WTC11 (cell line): ENCODE measurements at regions of chr19 and their contacts with region 1.

Region 1: DNA sequence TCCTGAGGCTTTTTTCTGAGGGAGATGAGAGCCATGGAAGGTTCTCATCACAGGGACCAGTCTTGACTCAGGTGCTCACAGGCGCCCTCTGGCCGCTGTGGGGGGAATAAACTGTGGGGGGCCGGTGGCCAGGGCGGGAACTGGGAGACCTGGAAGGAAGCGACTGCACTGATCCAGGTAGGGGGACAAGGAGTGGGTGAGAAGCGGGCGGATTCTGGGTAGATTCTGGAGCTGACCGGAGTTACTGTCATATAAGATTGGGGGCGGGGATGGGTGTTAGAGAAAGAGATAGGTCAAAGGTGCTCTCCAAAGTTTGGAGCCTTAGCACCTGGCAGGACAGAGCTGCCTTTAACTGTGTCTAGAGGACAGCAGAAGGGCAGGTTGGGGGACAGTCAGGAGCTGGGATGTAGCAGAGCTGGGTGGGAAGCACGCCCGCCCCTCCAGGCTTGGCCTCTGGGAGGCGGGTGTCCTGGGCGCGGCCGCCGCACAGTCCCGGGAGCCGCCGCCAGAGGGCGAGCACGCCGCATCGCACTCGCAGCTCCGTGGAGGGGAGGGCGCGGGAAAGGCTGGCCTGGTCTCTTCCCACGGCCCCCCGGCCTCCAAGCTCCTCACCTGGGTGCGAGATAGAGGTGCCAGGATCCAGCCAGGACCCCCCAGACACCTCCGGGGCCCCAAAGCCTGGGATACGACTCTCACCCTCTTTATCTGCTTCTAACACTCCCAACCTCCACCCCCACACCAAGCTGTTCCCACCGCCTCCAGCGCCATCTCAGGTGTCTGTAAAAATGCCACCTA is 4.2 kb upstream of the DAND5 start:
- DNase-seq: peak; percentile 91
- ATAC-seq: peak; percentile 95
- H3K4me3 Mint-ChIP-seq: peak overlapping the region; percentile 71
- H3K27ac Mint-ChIP-seq: peak overlapping the region; percentile 65
- H3K4me1 Mint-ChIP-seq: 0 out of 2 replicates have a peak, but pooled peaks cover 5% of the 10 kb centered on the region
- H3K27me3 Mint-ChIP-seq: peaks cover 14% of the 10 kb centered on the region
- CTCF ChIP-seq: peak; percentile 85

Region 2: DNA sequence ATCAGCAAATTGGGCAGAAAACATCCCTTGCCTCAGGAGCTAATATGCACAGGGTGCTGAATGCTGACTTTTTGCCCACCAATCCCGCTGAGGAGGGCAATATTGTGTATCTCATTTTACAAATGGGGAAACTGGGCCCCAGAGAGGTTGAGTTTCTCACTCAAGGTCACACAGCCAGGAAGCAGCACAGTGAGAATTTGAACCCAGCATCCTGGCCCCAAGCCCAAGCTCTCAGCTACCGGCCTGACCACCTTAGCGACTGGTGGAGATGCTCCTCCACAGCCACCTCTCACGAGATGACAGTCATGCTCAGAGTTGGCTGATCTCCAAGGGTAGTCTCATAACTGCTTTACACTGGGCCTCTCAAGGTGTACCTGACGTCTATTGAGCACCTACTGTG is 272.3 kb before region 1 on chr19:
- CTCF ChIA-PET with region 1: no interaction called
- POLR2A ChIA-PET with region 1: no interaction called
- DNase-seq: no peak
- ATAC-seq: no peak
- H3K4me3 Mint-ChIP-seq: no peak overlapping the region
- H3K27ac Mint-ChIP-seq: no peak overlapping the region
- H3K4me1 Mint-ChIP-seq: peaks cover 3% of the 10 kb centered on the region
- H3K27me3 Mint-ChIP-seq: no peaks in the 10 kb centered on the region
- CTCF ChIP-seq: no peak

Region 3: DNA sequence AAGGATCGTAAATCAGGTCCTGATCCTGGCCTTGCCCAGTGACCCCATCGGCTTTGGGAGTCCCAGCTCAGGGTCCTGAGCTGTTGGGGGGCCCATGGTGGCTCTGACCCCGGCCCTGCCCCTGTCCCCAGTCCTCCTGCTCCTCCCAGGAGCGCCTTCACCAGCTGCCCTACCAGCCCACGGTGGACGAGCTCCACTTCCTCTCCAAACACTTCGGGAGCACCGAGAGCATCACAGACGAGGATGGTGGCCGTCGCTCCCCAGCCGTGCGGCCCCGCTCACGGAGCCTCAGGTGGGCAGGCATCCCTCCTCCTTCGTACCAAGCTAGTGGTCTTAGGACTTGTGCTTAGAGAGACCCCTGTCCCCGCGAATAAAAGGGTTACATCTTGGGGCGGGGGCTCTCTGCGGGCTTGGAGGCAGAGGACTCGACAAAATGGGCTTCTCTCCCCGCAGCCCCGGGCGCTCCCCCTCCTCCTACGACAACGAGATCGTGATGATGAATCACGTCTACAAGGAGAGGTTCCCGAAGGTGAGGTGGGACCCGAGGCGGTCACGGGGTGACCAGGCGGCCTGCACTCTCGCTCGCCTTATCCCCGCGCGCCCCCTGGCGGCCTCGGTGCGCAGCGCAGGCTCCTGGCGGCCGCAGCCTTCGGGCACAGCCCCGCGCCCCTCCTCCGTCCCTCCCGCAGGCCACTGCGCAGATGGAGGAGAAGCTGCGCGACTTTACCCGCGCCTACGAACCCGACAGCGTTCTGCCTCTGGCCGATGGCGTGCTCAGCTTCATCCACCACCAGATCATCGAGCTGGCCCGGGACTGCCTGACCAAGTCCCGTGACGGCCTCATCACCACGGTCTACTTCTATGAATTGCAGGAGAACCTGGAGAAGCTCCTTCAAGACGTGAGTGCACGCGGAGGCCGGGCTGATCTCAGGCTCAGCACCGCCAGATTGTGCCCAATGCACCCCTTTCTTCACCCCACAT is 117.8 kb before region 1 on chr19:
- CTCF ChIA-PET with region 1: interaction called, 14 read pairs
- POLR2A ChIA-PET with region 1: no interaction called
- DNase-seq: peak; percentile 98
- ATAC-seq: peak; percentile 98
- H3K4me3 Mint-ChIP-seq: peak overlapping the region; percentile 58
- H3K27ac Mint-ChIP-seq: 0 out of 2 replicates have a peak overlapping the region, but pooled peaks have one; percentile 45
- H3K4me1 Mint-ChIP-seq: peaks cover 7% of the 10 kb centered on the region
- H3K27me3 Mint-ChIP-seq: peaks cover 21% of the 10 kb centered on the region
- CTCF ChIP-seq: peak; percentile 99

Region 4: DNA sequence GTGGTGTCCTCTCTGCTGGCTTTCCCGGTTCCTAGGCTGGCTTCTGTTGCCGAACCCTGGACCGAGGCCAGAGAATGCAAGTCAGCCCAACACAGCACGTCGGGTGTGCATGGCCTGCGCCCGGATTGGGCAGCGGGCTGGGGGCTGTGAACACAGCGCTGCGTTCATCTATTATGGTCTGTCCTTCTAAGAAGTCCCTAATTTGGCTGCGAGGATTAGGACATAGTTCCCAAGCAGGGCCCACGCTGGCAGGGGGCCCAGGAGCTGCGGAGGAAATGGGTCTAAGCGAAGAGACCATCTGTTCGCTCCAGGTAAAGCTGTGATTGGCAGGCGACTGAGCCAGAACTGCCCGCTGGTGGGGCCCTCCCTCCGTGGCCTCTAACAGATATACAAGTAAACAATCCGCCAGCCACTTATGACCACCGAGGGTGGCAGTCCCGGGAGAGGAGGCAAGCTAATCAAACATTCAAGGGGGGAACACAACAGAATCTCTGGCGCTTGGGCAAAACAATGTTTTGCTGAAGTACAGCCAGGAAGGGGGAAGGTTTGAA is 52.1 kb before region 1 on chr19:
- CTCF ChIA-PET with region 1: interaction called, 31 read pairs
- POLR2A ChIA-PET with region 1: interaction called, 3 read pairs
- DNase-seq: peak; percentile 67
- ATAC-seq: peak; percentile 80
- H3K4me3 Mint-ChIP-seq: peak overlapping the region; percentile 53
- H3K27ac Mint-ChIP-seq: peak overlapping the region; percentile 94
- H3K4me1 Mint-ChIP-seq: peaks cover 27% of the 10 kb centered on the region
- H3K27me3 Mint-ChIP-seq: peaks cover 10% of the 10 kb centered on the region
- CTCF ChIP-seq: no peak

Region 5: DNA sequence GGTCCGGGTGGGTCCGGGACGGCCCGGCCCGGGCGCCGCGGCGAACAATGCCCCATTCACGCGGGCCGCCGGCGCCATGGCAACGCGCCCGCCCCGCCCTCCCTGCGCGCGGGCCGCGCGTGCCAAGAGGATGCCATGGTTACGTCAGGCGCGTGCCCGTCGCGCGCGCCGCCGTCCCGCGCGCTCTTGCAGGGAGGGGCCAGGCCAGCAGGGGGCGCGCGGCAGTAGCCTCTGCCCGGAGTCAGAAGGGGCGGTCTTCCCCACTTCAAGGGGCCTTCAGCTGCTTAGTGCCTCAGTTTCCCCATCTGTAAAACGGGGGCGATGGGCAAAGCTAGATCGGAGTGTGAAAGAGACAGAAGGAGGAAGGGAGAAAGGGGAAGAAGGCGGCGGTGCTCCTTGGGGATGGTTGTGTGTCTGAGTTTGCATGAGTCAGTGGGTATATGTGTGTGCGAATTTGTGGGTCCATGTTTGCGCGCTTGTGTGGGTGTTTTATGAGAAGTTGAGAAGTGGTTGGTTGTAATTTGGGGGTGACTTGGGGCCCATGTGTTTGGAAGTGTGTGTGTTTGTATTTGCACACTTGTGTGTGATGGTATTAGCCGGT is 18.4 kb after region 1 on chr19:
- CTCF ChIA-PET with region 1: interaction called, 197 read pairs
- POLR2A ChIA-PET with region 1: interaction called, 5 read pairs
- DNase-seq: peak; percentile 81
- ATAC-seq: peak; percentile 76
- H3K4me3 Mint-ChIP-seq: no peak overlapping the region
- H3K27ac Mint-ChIP-seq: no peak overlapping the region
- H3K4me1 Mint-ChIP-seq: peaks cover 6% of the 10 kb centered on the region; the same call in 1 of the 2 replicates
- H3K27me3 Mint-ChIP-seq: peaks cover 39% of the 10 kb centered on the region
- CTCF ChIP-seq: peak; percentile 94

Region 6: DNA sequence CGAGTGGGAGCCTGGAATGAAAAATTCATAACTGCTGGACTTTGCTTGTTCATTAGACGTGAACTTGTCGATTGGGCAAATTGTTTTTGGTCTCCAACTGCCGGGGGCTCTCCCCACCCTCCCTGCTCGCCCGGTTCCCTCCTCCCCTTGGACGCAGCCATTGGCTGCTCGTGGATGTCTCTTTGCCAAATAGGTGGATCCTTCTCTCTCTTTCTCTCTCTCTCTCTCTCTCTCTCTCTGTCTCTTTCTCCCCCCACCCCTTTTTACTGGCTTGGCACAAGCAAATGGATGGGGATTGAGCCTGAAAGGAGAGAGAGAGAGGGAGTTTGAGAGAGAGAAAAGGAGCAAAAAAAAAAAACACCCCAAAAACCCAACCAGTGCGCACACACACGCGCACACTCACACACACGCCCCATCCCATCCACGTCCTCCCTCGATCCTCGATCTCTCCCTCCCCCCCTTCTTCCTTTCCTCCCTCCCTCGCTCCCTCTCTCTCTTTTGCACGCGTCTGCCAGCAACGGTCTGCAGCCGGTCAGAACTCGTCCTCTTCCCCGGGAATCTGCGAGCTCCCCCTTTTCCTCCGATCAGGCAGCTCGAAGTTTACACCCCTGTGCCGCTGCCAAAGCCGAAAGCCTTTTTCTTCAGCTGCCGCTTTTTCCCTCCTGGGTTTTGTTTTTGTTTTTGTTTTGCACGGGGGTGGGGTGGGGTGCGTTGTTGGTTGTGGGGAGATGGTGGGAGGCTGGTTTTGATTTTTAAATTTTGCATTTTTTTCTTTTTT is 57.8 kb after region 1 on chr19:
- CTCF ChIA-PET with region 1: interaction called, 14 read pairs
- POLR2A ChIA-PET with region 1: no interaction called
- DNase-seq: peak; percentile 61
- ATAC-seq: 0 out of 2 replicates have a peak, but pooled peaks have one; percentile 6
- H3K4me3 Mint-ChIP-seq: peak overlapping the region; percentile 57
- H3K27ac Mint-ChIP-seq: no peak overlapping the region
- H3K4me1 Mint-ChIP-seq: peaks cover 71% of the 10 kb centered on the region
- H3K27me3 Mint-ChIP-seq: peaks cover 100% of the 10 kb centered on the region
- CTCF ChIP-seq: no peak

Region 7: DNA sequence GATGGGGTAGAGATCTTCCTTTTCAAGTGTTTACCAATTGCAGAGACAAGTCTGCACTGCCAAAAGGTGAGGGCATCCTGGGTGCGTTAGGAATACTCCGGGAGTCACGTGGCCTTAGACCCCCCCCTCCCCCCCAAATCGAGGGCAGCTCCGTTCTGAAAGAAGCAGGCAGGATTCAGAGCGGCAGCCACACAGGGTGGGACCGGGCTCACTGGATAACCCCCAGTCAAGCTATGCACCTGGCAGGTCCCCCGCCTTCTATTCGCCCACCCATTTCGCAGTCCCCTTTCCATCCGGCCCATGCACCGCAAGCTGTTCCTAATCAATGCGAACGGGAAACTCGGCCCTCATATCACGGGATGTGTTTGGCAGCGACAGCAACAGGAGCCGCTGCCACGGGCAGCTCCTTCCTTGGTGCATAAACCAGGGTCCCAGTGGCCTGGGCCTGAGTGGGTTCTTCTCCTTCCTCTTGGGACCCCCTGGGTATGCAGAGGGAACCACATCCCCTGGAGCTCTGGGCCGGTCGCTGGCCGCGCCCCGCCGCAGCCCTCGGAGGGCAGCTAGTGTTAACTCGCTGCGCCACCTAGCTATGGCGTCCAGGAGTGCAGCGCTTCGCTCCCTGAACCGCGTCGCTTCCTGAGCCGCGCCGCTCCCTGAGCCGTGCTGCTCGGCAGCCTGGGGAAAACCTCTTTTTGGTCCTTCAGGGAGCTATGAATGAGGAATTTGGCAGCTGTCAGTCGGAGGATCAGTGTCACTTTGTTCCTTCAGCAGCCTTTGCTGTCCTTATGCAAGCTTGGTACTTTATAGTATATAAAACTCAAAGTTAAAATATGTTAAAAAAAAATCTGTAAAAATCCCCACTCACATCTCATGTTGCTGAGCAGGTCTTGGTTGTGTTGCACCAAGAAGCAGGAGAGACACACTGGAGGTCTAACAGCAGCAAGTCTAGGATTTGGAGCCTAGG is 96.0 kb after region 1 on chr19:
- CTCF ChIA-PET with region 1: interaction called, 91 read pairs
- POLR2A ChIA-PET with region 1: no interaction called
- DNase-seq: peak; percentile 93
- ATAC-seq: peak; percentile 85
- H3K4me3 Mint-ChIP-seq: peak overlapping the region; percentile 64
- H3K27ac Mint-ChIP-seq: no peak overlapping the region
- H3K4me1 Mint-ChIP-seq: peaks cover 26% of the 10 kb centered on the region
- H3K27me3 Mint-ChIP-seq: peaks cover 76% of the 10 kb centered on the region
- CTCF ChIP-seq: peak; percentile 76

Region 8: DNA sequence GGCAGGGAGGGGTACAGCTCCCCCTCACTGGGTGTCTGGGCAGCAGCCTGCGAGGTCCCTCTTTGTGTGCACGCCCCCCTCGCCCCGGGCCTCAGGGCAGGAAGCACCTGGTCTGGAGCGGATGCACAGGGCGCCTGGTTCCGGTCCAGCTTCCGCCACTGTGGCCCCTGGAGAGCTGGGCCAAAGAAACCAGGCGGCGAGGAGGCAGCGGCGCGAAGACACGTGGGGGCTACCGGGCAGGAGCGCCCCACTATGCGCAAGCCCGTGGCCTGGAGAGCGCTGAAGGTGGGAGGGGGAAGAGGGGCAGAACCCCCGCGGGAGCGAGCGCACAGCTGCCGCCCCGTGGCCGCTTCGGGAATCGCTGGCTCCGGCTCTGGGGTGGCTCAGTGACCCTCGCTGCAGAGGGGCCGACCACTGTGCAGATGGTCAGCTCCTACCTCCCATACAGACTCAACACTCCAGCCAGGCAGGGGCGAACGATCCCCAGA is 139.2 kb after region 1 on chr19:
- CTCF ChIA-PET with region 1: interaction called, 36 read pairs
- POLR2A ChIA-PET with region 1: no interaction called
- DNase-seq: peak; percentile 82
- ATAC-seq: peak; percentile 57
- H3K4me3 Mint-ChIP-seq: no peak overlapping the region
- H3K27ac Mint-ChIP-seq: no peak overlapping the region; the same call in 1 of the 2 replicates
- H3K4me1 Mint-ChIP-seq: peaks cover 4% of the 10 kb centered on the region
- H3K27me3 Mint-ChIP-seq: peaks cover 30% of the 10 kb centered on the region
- CTCF ChIP-seq: peak; percentile 73